OCI-LY7 (cell line): ENCODE measurements at regions of chr5 and their contacts with region 1.

Region 1: GRCh38 chr5:171226864-171227263 is 82.2 kb upstream of the TLX3 start:
- DNase-seq: no peak
- H3K4me3 ChIP-seq: no peak overlapping the region
- H3K27ac ChIP-seq: no peak overlapping the region
- H3K4me1 ChIP-seq: no peaks in the 10 kb centered on the region
- CTCF ChIP-seq: no peak

Region 2: DNA sequence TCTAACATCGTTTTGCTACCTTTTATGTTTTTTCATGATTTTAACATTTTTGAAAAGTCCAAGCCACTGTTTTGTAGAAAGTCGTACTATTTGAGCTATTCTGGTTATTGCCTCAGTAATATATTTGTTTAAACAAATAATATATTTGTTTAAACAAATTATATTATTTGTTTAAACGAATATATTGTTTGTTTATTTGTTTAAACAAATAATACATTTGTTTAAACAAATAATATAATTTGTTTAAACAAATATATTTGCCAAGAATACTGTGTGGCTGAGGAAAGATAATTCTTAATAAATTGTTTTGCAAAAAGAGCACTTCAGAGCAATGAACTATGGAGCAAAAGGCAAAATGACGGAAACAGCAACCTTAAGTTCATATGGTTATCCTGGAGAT is 215.0 kb before region 1 on chr5:
- CTCF ChIA-PET with region 1: no interaction called
- POLR2A ChIA-PET with region 1: interaction called, 18 read pairs
- intact Hi-C with region 1: no loop called
- DNase-seq: no peak
- H3K4me3 ChIP-seq: no peak overlapping the region
- H3K27ac ChIP-seq: no peak overlapping the region
- H3K4me1 ChIP-seq: no peaks in the 10 kb centered on the region
- CTCF ChIP-seq: no peak

Region 3: DNA sequence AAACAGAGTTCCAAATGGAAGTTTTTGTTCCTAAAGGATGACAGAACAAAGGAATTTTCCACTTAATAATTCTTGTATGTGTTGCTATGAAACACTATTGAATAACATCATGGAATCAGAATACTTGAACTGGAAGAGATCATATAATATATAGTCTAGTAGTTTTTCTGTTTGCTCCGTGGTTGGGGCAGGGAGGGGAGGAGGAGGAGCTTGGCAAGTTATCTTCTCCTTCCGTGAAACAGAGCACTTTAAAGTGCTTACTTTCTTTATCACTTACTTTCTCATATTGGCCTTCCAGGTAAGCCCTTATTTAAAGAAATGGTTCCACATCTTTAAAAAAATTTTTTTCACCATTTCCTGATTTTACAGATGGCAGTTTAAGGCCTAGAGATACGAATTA is 83.7 kb before region 1 on chr5:
- CTCF ChIA-PET with region 1: no interaction called
- POLR2A ChIA-PET with region 1: no interaction called
- intact Hi-C with region 1: no loop called
- DNase-seq: no peak
- H3K4me3 ChIP-seq: no peak overlapping the region
- H3K27ac ChIP-seq: no peak overlapping the region
- H3K4me1 ChIP-seq: no peaks in the 10 kb centered on the region
- CTCF ChIP-seq: no peak